ENCODE measurements at regions of chr18 and their contacts with region 1.

Region 1: DNA sequence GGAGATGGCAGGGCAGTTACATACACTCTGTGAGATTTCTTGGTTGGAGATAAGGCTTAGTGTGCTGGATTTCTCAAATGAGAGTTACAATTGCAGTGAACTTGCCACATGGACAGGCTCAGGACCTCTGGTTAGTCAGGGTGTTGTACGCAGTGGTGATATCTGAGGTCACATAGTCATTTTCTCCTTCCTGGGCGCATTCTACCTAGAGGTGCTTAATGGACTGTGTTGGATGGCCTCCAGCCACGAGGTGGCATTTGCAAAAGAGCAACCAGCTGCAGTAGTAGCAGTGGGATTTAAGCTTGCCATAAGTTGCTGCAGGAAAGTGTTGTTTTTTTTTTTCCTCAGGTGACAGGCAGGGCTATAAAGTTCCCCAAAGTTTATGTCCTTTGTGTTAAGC is 173.8 kb upstream of the TMEM200C start:
- DNase-seq: peak; percentile 56
- ATAC-seq: peak; percentile 10
- H3K4me3 ChIP-seq: peak overlapping the region; percentile 5
- H3K27ac ChIP-seq: peak overlapping the region; percentile 91
- H3K4me1 ChIP-seq: peaks cover 45% of the 10 kb centered on the region
- H3K27me3 ChIP-seq: no peaks in the 10 kb centered on the region
- CTCF ChIP-seq: 0 out of 2 replicates have a peak, but pooled peaks have one; percentile 24

Region 2: GRCh38 chr18:5890331-5891183 is 178.5 kb before region 1 on chr18:
- CTCF ChIA-PET with region 1: no interaction called
- POLR2A ChIA-PET with region 1: no interaction called
- intact Hi-C with region 1: loop called (anchors 5 kb)
- DNase-seq: peak; percentile 56
- ATAC-seq: peak; percentile 80
- H3K4me3 ChIP-seq: peak overlapping the region; percentile 65
- H3K27ac ChIP-seq: no peak overlapping the region
- H3K4me1 ChIP-seq: 0 out of 2 replicates have a peak, but pooled peaks cover 4% of the 10 kb centered on the region
- H3K27me3 ChIP-seq: peaks cover 17% of the 10 kb centered on the region
- CTCF ChIP-seq: peak; percentile 37; the same call in 1 of the 2 replicates

Region 3: GRCh38 chr18:6009756-6010155 is 59.3 kb before region 1 on chr18:
- CTCF ChIA-PET with region 1: no interaction called
- POLR2A ChIA-PET with region 1: no interaction called
- intact Hi-C with region 1: loop called (anchors 1 kb)
- DNase-seq: peak; percentile 77
- ATAC-seq: peak; percentile 90
- H3K4me3 ChIP-seq: peak overlapping the region; percentile 40; the same call in 1 of the 2 replicates
- H3K27ac ChIP-seq: peak overlapping the region; percentile 76
- H3K4me1 ChIP-seq: peaks cover 20% of the 10 kb centered on the region
- H3K27me3 ChIP-seq: no peaks in the 10 kb centered on the region
- CTCF ChIP-seq: no peak

Region 4: DNA sequence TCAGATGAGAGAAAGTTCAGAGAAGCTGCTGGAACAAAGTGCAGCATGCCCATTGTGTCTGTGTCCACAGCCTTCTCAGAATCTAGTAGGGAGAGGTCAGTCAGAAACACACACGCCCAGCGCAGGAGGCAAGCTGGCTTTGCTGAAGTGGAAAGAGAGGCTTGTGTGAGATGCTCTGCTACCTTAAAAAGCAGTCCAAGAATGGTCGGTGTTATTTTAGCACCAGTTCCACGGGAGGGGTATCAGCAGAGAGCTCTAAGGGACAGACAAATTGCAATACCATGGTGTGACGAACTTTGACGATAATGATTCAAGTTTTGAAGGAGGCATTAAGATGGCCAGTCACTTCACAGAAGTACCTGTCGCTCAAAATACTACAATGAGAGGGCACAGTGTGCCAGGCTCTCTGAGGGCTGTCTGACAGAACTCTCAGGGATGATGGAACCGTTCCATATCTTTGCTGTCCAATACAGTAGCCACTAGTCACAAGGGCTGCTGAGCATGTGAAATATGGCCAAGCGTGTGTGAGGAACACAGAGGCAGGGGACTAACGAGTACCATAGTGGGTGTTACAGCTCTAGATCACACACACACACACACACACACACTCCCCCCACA is 63.8 kb after region 1 on chr18:
- CTCF ChIA-PET with region 1: no interaction called
- POLR2A ChIA-PET with region 1: no interaction called
- intact Hi-C with region 1: no loop called
- DNase-seq: no peak
- ATAC-seq: no peak
- H3K4me3 ChIP-seq: no peak overlapping the region
- H3K27ac ChIP-seq: no peak overlapping the region
- H3K4me1 ChIP-seq: no peaks in the 10 kb centered on the region
- H3K27me3 ChIP-seq: no peaks in the 10 kb centered on the region
- CTCF ChIP-seq: no peak